SK-N-SH (cell line): ENCODE measurements at regions of chr12 and their contacts with region 1.

Region 1: GRCh38 chr12:126784328-126784921 is 1482.5 kb upstream of the TMEM132C start:
- DNase-seq: peak; percentile 32
- H3K4me3 ChIP-seq: no peak overlapping the region; a peak in 1 of 4 replicates
- H3K27ac ChIP-seq: no peak overlapping the region
- H3K4me1 ChIP-seq: no peaks in the 10 kb centered on the region; a peak in 1 of 4 replicates
- H3K27me3 ChIP-seq: no peaks in the 10 kb centered on the region
- CTCF ChIP-seq: peak; percentile 57
- EP300 ChIP-seq: no peak
- RAD21 ChIP-seq: peak; percentile 56

Region 2: DNA sequence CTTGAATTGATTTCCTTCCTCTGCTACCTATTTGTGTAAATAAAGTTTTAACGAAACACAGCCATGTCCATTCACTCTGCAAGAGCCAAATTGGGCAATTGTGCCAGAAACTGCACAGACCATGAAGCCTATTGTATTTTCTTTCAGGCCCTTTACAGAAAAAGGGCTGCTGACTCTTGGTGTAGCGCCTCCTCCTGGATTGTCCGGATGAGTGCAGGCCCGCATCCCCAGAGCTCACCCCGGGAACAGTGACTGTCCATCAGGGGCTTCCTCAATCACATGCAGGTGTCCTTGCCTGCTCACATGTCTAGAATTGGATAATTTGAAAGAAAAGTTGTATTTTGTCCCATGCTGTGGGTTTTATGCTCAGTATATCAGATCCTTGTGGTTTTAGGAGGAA is 437.0 kb before region 1 on chr12:
- CTCF ChIA-PET with region 1: no interaction called
- POLR2A ChIA-PET with region 1: no interaction called
- DNase-seq: no peak
- H3K4me3 ChIP-seq: no peak overlapping the region
- H3K27ac ChIP-seq: no peak overlapping the region
- H3K4me1 ChIP-seq: no peaks in the 10 kb centered on the region; a peak in 1 of 4 replicates
- H3K27me3 ChIP-seq: no peaks in the 10 kb centered on the region
- CTCF ChIP-seq: peak; percentile 45
- EP300 ChIP-seq: no peak
- RAD21 ChIP-seq: no peak

Region 3: DNA sequence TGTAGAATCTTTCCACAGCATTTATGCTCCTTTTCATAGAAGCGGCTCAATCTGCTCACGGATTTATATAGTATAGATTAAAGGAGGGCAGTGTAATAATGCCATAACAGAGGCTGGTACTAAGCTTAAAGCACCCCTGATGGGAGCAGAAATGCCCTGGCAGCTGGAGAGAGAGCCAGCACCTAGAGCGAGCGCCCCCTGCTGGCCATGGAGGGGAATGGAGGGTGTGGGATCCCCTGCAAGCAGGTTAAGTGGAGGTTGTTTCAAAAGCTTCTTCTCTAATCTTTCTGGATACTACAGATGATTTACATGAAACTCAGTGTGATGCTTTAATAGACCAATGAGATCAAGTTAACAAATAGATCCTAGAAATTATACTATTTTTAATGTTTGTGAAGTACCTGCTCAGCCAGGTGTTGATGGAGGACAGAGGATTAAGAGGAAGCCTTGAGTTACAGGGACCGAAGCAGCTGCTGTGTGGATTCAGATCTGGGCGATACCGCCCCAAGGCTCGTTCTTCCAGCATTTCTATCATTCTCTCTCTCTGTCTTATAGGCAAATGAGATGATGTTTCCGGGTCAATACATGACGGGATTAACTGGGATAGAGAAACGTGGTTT is 36.8 kb before region 1 on chr12:
- CTCF ChIA-PET with region 1: interaction called, 16 read pairs
- POLR2A ChIA-PET with region 1: no interaction called
- DNase-seq: peak; percentile 69
- H3K4me3 ChIP-seq: no peak overlapping the region
- H3K27ac ChIP-seq: no peak overlapping the region
- H3K4me1 ChIP-seq: no peaks in the 10 kb centered on the region
- H3K27me3 ChIP-seq: no peaks in the 10 kb centered on the region
- CTCF ChIP-seq: peak; percentile 83
- EP300 ChIP-seq: no peak
- RAD21 ChIP-seq: peak; percentile 61

Region 4: GRCh38 chr12:126767334-126767733 is 17.1 kb before region 1 on chr12:
- CTCF ChIA-PET with region 1: interaction called, 11 read pairs
- POLR2A ChIA-PET with region 1: no interaction called
- DNase-seq: no peak
- H3K4me3 ChIP-seq: no peak overlapping the region
- H3K27ac ChIP-seq: no peak overlapping the region
- H3K4me1 ChIP-seq: no peaks in the 10 kb centered on the region
- H3K27me3 ChIP-seq: no peaks in the 10 kb centered on the region
- CTCF ChIP-seq: no peak
- EP300 ChIP-seq: no peak
- RAD21 ChIP-seq: no peak

Region 5: GRCh38 chr12:126797525-126797924 is 13.1 kb after region 1 on chr12:
- CTCF ChIA-PET with region 1: interaction called, 16 read pairs
- POLR2A ChIA-PET with region 1: no interaction called
- DNase-seq: no peak
- H3K4me3 ChIP-seq: no peak overlapping the region
- H3K27ac ChIP-seq: no peak overlapping the region
- H3K4me1 ChIP-seq: no peaks in the 10 kb centered on the region
- H3K27me3 ChIP-seq: no peaks in the 10 kb centered on the region
- CTCF ChIP-seq: no peak
- EP300 ChIP-seq: no peak
- RAD21 ChIP-seq: no peak

Region 6: DNA sequence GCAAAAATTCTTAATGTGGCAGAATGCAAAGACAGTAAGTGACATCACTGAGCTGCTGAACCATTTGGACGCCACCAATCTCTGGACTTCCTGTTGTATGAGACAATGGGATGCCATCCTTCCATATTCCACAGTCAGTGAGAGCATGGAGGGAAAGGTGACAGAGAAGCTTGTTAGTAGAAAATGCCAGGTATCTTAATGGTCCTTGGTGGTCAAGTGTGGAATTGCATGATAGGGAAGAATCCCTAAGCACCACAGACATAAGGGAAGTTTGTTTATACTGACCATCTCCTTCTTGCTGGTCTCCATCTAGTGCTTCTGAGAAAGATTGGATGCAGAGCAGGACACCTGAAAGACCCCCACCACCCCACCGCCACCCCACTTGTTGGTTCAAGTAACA is 72.5 kb after region 1 on chr12:
- CTCF ChIA-PET with region 1: no interaction called
- POLR2A ChIA-PET with region 1: no interaction called
- DNase-seq: no peak
- H3K4me3 ChIP-seq: no peak overlapping the region
- H3K27ac ChIP-seq: no peak overlapping the region
- H3K4me1 ChIP-seq: no peaks in the 10 kb centered on the region
- H3K27me3 ChIP-seq: no peaks in the 10 kb centered on the region
- CTCF ChIP-seq: no peak
- EP300 ChIP-seq: no peak
- RAD21 ChIP-seq: no peak

Region 7: DNA sequence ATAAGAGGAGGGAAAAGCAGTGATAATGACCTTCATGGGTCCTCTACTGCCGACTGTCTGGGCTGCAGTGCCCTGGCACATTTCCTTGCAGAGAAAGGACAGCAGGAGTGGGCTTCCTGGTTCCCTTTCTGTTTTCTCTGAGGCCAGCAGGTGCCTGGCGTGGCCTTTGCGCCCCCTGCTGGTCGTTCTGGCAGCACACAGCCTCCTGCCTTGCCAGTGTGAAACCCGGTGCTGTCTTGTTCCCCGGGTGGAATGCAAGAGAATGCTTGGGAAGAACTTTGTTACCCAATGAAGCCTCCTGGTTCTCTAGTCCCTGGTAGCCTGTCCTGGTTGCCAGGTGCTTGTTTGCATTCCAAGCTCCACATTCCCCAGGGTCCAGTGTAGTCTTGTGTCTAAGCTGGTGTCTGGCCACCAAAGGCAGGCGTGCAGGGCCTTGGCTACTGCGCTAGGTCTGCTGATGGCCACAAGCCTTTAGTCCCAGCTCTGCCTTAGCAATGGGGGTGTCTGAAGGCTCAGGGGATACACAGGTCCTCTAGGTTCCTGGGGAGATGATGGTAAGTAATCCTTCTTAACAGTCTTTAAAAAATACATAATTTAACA is 90.1 kb after region 1 on chr12:
- CTCF ChIA-PET with region 1: interaction called, 16 read pairs
- POLR2A ChIA-PET with region 1: no interaction called
- DNase-seq: peak; percentile 70
- H3K4me3 ChIP-seq: peak overlapping the region in 1 of 2 experiments; percentile 30; a peak in 1 of 4 replicates
- H3K27ac ChIP-seq: no peak overlapping the region
- H3K4me1 ChIP-seq: no peaks in the 10 kb centered on the region
- H3K27me3 ChIP-seq: no peaks in the 10 kb centered on the region
- CTCF ChIP-seq: peak; percentile 66
- EP300 ChIP-seq: no peak
- RAD21 ChIP-seq: peak; percentile 74

Region 8: GRCh38 chr12:126891789-126892188 is 107.4 kb after region 1 on chr12:
- CTCF ChIA-PET with region 1: no interaction called
- POLR2A ChIA-PET with region 1: no interaction called
- DNase-seq: peak; percentile 19
- H3K4me3 ChIP-seq: no peak overlapping the region
- H3K27ac ChIP-seq: no peak overlapping the region
- H3K4me1 ChIP-seq: no peaks in the 10 kb centered on the region
- H3K27me3 ChIP-seq: no peaks in the 10 kb centered on the region
- CTCF ChIP-seq: no peak
- EP300 ChIP-seq: no peak
- RAD21 ChIP-seq: no peak

Region 9: GRCh38 chr12:127381048-127381668 is 596.7 kb after region 1 on chr12:
- CTCF ChIA-PET with region 1: interaction called, 57 read pairs
- POLR2A ChIA-PET with region 1: no interaction called
- DNase-seq: peak; percentile 88
- H3K4me3 ChIP-seq: peak overlapping the region; percentile 17 to 41; a peak in 3 of 4 replicates
- H3K27ac ChIP-seq: no peak overlapping the region
- H3K4me1 ChIP-seq: peaks cover 0 to 2% of the 10 kb centered on the region in 2 experiments; a peak in 1 of 4 replicates
- H3K27me3 ChIP-seq: no peaks in the 10 kb centered on the region
- CTCF ChIP-seq: peak; percentile 59
- EP300 ChIP-seq: no peak
- RAD21 ChIP-seq: peak; percentile 78